ENCODE measurements at regions of chr14 and their contacts with region 1.

Region 1: GRCh38 chr14:103292426-103293374 is 41.3 kb upstream of the EIF5 start:
- DNase-seq: peak; percentile 70
- H3K4me3 ChIP-seq: no peak overlapping the region
- H3K27ac ChIP-seq: no peak overlapping the region
- H3K4me1 ChIP-seq: no peaks in the 10 kb centered on the region
- H3K27me3 ChIP-seq: no peaks in the 10 kb centered on the region
- CTCF ChIP-seq: peak; percentile 92 to 95 (median 93)
- POLR2A ChIP-seq: no peak

Region 2: GRCh38 chr14:102694530-102695166 is 598.1 kb before region 1 on chr14:
- intact Hi-C with region 1: loop called (anchors 5 kb)
- DNase-seq: peak; percentile 77
- H3K4me3 ChIP-seq: no peak overlapping the region
- H3K27ac ChIP-seq: no peak overlapping the region
- H3K4me1 ChIP-seq: peaks cover 7% of the 10 kb centered on the region
- H3K27me3 ChIP-seq: no peaks in the 10 kb centered on the region
- CTCF ChIP-seq: peak in 3 of 4 experiments; percentile 77 to 83 (median 78)
- POLR2A ChIP-seq: no peak

Region 3: GRCh38 chr14:103078093-103078749 is 214.5 kb before region 1 on chr14:
- intact Hi-C with region 1: loop called (anchors 5 kb)
- DNase-seq: peak; percentile 76
- H3K4me3 ChIP-seq: no peak overlapping the region
- H3K27ac ChIP-seq: no peak overlapping the region
- H3K4me1 ChIP-seq: no peaks in the 10 kb centered on the region
- H3K27me3 ChIP-seq: no peaks in the 10 kb centered on the region
- CTCF ChIP-seq: peak; percentile 38 to 83 (median 62)
- POLR2A ChIP-seq: no peak

Region 4: DNA sequence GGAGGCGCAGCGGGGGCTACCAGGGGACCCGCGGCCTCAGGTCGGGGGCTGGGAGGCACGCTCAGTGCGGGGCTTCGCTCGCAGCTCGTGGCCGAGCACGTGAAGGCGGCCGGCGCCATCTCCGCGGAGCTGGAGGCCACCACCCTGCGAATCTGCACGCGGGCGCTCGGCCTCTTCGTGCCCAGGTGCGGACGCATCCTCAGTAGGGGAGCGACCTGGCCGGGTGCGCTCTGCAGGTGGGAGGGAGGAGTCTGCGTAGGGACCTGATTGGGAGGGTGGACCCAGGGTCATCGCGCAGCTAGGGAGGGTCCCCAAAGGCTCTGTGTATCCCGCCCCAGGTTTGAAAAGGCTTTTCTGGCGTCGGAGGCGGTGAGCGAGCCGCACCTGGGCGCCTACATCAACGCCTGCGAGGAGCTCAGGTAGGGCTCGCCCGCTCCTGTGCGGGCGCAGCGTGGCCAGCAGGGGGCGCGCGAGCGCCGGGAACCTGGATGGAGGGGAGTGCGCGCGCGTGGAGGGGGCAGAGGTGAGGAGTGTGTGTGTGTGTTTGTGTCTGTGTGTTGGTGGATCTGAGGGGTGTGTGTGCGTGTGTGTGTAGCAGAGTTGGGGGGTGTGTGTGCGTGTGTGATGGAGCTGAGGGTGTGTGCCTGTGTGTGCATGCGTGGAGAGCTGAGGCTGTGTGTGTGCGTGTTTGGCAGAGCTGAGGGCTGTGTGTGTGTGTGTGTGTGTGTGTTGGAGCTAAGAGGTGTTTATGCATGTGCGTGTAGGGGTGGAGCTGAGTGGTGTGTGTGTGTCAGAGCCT is 187.8 kb before region 1 on chr14:
- intact Hi-C with region 1: loop called (anchors 5 kb)
- DNase-seq: peak; percentile 54
- H3K4me3 ChIP-seq: no peak overlapping the region
- H3K27ac ChIP-seq: no peak overlapping the region
- H3K4me1 ChIP-seq: peaks cover 4% of the 10 kb centered on the region
- H3K27me3 ChIP-seq: peaks cover 28% of the 10 kb centered on the region
- CTCF ChIP-seq: peak; percentile 95 to 99 (median 96)
- POLR2A ChIP-seq: no peak

Region 5: GRCh38 chr14:103169954-103170353 is 122.7 kb before region 1 on chr14:
- intact Hi-C with region 1: no loop called
- DNase-seq: no peak
- H3K4me3 ChIP-seq: no peak overlapping the region
- H3K27ac ChIP-seq: no peak overlapping the region
- H3K4me1 ChIP-seq: no peaks in the 10 kb centered on the region
- H3K27me3 ChIP-seq: no peaks in the 10 kb centered on the region
- CTCF ChIP-seq: no peak
- POLR2A ChIP-seq: no peak

Region 6: GRCh38 chr14:103185051-103185992 is 107.4 kb before region 1 on chr14:
- intact Hi-C with region 1: loop called (anchors 5 kb)
- DNase-seq: no peak
- H3K4me3 ChIP-seq: no peak overlapping the region
- H3K27ac ChIP-seq: no peak overlapping the region
- H3K4me1 ChIP-seq: no peaks in the 10 kb centered on the region
- H3K27me3 ChIP-seq: no peaks in the 10 kb centered on the region
- CTCF ChIP-seq: peak in 3 of 4 experiments; percentile 66 to 82 (median 67)
- POLR2A ChIP-seq: no peak

Region 7: GRCh38 chr14:103518422-103519042 is 225.8 kb after region 1 on chr14:
- intact Hi-C with region 1: no loop called
- DNase-seq: peak; percentile 54
- H3K4me3 ChIP-seq: no peak overlapping the region
- H3K27ac ChIP-seq: peak overlapping the region; percentile 68 to 92
- H3K4me1 ChIP-seq: peaks cover 24% of the 10 kb centered on the region
- H3K27me3 ChIP-seq: no peaks in the 10 kb centered on the region
- CTCF ChIP-seq: peak; percentile 94 to 96 (median 95)
- POLR2A ChIP-seq: no peak

Measured in prostate gland (tissue), 2 donors.